Aorta (tissue), 5 donors: ENCODE measurements at regions of chr13 and their contacts with region 1.

Region 1: DNA sequence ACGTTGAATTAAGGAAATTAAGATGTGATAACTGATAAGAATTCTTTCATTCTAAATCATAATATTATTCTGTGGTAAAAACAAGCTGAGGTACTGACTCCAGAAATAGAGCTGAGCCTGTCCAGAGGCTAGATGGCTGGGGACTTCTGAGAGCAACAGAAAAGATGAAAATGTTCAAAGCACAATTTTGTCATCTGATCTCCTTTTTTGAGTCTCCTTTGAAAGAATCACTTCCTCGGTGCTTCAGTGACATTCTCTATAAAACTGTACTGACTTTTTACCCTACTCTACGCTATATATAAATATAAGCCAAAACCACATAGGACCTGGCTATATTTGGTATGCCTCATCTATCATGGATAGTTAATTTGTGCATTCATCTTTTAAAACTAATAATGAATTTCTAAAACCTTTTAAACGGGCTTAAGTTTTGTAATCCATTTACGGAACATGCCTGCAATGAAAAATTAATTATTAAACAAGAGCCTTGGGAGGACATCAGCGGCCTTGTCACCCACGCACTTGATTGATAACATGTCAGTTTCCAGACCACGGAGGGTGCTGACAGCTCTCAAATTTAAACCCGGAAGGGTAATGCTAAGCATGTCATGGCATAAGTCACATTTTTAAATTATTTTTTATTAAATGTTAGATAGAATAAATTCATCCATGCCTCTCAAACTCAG is 235.5 kb downstream of the PCDH9 start:
- DNase-seq: no peak
- ATAC-seq: no peak
- H3K4me3 ChIP-seq: peak overlapping the region in 1 of 2 donors; percentile 41
- H3K27ac ChIP-seq: no peak overlapping the region
- H3K4me1 ChIP-seq: peaks cover 0 to 5% of the 10 kb centered on the region in 2 donors
- H3K27me3 ChIP-seq: no peaks in the 10 kb centered on the region

Region 2: DNA sequence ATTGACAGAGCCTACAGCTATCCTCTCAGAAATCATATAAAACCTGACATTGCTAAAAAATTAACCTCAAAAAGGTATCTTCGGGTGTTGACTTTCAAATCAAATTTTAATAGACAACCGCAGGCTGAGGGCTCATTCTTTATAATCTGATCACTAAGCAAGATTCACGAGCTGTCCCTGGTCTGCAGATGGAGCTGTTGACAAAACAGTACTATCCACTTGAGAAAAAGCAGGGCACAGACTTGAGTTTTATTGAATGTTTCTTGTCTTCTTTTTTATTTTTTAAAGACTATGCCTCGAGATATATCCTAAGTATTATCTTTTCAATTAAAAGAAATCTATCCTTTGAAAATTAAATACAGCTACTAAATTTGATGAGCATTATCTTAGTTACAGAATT is 305.0 kb before region 1 on chr13:
- intact Hi-C with region 1: loop called in 1 of 2 experiments (anchors 5 kb)
- DNase-seq: no peak
- ATAC-seq: no peak
- H3K4me3 ChIP-seq: no peak overlapping the region
- H3K27ac ChIP-seq: no peak overlapping the region
- H3K4me1 ChIP-seq: no peaks in the 10 kb centered on the region
- H3K27me3 ChIP-seq: no peaks in the 10 kb centered on the region

Region 3: GRCh38 chr13:67119481-67119883 is 124.8 kb after region 1 on chr13:
- intact Hi-C with region 1: no loop called
- DNase-seq: no peak
- ATAC-seq: no peak
- H3K4me3 ChIP-seq: no peak overlapping the region
- H3K27ac ChIP-seq: no peak overlapping the region
- H3K4me1 ChIP-seq: no peaks in the 10 kb centered on the region
- H3K27me3 ChIP-seq: no peaks in the 10 kb centered on the region